CD4-positive, alpha-beta memory T cell (primary cell): ENCODE measurements at regions of chr9 and their contacts with region 1.

Region 1: DNA sequence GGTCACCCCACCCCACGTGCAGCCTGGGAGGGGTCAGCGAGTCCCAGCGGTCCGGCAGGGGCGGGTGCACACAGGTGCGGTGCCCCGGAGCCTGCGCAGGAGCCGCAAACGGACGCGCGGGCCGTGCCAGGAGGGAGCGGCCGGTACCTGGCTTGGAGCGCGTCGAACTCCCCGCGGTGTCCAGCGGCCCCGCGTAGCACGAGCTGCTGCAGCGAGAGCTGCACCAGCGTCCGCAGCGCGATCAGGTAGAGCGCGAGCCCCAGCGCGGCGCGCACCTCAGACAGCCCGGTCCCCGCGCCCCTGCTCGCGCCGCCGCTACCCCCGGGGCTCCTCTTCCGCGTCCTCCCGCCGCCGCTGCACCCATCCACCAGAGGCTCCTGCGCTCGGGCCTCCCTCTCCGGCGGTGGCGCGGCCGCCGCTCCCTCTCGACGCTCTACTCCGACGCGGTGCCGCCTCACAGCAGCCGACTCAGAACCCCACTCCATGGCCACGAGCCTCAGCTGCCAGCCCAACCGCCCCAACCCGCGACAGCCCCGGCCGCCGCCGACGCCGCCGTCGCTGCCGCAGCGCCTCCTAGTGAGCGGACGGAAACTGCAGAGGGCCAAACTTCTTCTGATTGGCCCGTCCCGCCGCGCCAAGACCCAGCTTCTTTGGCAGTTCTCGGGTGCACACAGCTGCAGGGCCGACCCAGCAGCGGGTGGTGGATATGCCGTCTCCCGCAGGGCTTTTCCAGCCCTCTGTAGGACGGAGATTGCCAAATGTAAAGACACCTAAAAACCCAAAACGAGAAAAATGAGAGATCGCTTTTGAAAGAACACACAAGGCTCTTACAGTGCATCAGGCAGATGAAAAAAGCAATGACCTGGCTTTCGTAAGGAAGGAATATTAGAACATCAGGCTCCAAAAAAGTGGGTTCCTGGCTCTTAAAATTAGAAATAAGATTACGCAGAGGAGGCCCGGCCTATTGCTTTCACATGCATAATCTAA is at the start of gene ERMP1:
- DNase-seq: peak; percentile 87 to 93 (median 90)
- H3K4me3 ChIP-seq: peak within 1 kb of the TSS; percentile 72 to 93
- H3K4me3 Mint-ChIP-seq: peak within 1 kb of the TSS; percentile 91 to 98 (median 96)
- H3K27ac ChIP-seq: peak within 1 kb of the TSS; percentile 53
- H3K27ac Mint-ChIP-seq: peak within 1 kb of the TSS; percentile 88 to 97 (median 95)
- H3K4me1 ChIP-seq: peaks cover 42% of the 10 kb centered on the region
- H3K4me1 Mint-ChIP-seq: peaks cover 33 to 58% (median 43%) of the 10 kb centered on the region in 4 donors
- H3K27me3 ChIP-seq: no peaks in the 10 kb centered on the region
- H3K27me3 Mint-ChIP-seq: no peaks in the 10 kb centered on the region
- total RNA-seq, gene ERMP1: 22.8 to 24.5 TPM

Region 2: DNA sequence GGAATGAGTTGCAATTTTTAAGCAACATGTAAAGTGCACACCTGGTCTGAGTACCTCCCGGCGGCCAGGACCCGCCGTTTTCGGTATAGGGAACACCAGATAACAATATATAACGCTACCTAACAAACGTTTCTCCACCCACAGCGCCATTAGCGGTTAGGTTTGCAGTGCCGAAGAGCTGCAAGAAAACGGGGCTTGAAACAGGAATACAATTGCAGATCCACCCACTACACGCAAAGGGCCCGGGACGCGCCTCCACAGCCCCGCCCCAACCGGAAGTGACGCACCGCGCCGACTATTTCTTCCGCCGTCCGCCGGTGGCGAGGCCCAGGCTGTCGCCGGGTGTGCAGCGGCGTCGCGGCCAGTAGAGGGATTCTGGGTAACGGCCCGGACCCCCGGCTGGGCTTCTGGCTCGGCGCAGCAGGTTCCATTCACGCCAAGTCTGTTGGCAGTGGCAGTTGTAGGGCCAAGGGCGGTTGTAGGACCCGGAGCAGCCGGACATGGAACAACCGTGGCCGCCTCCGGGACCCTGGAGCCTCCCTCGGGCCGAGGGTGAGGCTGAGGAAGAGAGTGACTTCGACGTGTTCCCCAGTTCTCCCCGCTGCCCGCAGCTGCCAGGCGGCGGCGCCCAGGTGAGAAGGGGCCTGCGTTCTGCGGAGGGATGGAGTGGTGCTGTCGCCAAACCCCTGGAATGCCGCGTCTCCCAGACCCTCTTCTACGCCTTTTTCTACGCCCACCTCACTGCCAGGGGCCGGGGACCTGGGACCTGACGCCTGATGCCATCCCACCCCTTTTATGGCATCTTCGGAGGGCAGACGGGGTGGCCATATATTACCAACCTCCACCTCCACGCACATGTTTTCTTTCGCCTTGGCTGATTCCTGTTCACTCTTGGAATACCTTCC is 1153.3 kb before region 1 on chr9 and contains the start of gene CDC37L1:
- CTCF ChIA-PET with region 1: no interaction called
- POLR2A ChIA-PET with region 1: no interaction called
- intact Hi-C with region 1: no loop called
- DNase-seq: peak; percentile 97 to 99 (median 99)
- H3K4me3 ChIP-seq: peak within 1 kb of the TSS; percentile 72 to 80
- H3K4me3 Mint-ChIP-seq: no peak within 1 kb of the TSS
- H3K27ac ChIP-seq: peak within 1 kb of the TSS; percentile 94
- H3K27ac Mint-ChIP-seq: no peak within 1 kb of the TSS
- H3K4me1 ChIP-seq: peaks cover 36% of the 10 kb centered on the region
- H3K4me1 Mint-ChIP-seq: peaks cover 11 to 16% (median 11%) of the 10 kb centered on the region in 4 donors
- H3K27me3 ChIP-seq: no peaks in the 10 kb centered on the region
- H3K27me3 Mint-ChIP-seq: no peaks in the 10 kb centered on the region
- total RNA-seq, gene CDC37L1: 27.2 to 27.8 TPM

Region 3: DNA sequence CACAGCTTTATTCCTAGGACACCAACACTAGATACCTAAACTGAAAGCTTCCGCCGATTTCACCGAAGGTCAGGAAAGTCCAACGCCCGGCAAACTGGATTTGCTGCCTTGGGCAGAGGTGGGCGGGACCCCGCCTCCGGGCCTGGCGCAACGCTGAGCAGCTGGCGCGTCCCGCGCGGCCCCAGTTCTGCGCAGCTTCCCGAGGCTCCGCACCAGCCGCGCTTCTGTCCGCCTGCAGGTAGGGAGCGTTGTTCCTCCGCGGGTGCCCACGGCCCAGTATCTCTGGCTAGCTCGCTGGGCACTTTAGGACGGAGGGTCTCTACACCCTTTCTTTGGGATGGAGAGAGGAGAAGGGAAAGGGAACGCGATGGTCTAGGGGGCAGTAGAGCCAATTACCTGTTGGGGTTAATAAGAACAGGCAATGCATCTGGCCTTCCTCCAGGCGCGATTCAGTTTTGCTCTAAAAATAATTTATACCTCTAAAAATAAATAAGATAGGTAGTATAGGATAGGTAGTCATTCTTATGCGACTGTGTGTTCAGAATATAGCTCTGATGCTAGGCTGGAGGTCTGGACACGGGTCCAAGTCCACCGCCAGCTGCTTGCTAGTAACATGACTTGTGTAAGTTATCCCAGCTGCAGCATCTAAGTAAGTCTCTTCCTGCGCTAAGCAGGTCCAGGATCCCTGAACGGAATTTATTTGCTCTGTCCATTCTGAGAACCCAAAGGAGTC is 382.3 kb before region 1 on chr9 and contains the start of gene CD274:
- CTCF ChIA-PET with region 1: no interaction called
- POLR2A ChIA-PET with region 1: interaction called, 7 read pairs
- intact Hi-C with region 1: loop called (anchors 1 kb)
- DNase-seq: peak; percentile 78 to 82 (median 80)
- H3K4me3 ChIP-seq: peak within 1 kb of the TSS; percentile 65 to 67
- H3K4me3 Mint-ChIP-seq: peak within 1 kb of the TSS; percentile 87 to 96 (median 94)
- H3K27ac ChIP-seq: peak within 1 kb of the TSS; percentile 97
- H3K27ac Mint-ChIP-seq: peak within 1 kb of the TSS; percentile 92 to 99 (median 95)
- H3K4me1 ChIP-seq: peaks cover 77% of the 10 kb centered on the region
- H3K4me1 Mint-ChIP-seq: peaks cover 50 to 89% (median 62%) of the 10 kb centered on the region in 4 donors
- H3K27me3 ChIP-seq: no peaks in the 10 kb centered on the region
- H3K27me3 Mint-ChIP-seq: no peaks in the 10 kb centered on the region
- total RNA-seq, gene CD274: 16.2 to 23.0 TPM

Region 4: GRCh38 chr9:5799314-5799713 is 33.5 kb before region 1 on chr9:
- CTCF ChIA-PET with region 1: interaction called, 14 read pairs
- POLR2A ChIA-PET with region 1: no interaction called
- intact Hi-C with region 1: loop called (anchors 5 kb)
- DNase-seq: peak in 4 of 5 donors; percentile 3 to 15 (median 7)
- H3K4me3 ChIP-seq: no peak overlapping the region
- H3K4me3 Mint-ChIP-seq: no peak overlapping the region
- H3K27ac ChIP-seq: no peak overlapping the region
- H3K27ac Mint-ChIP-seq: peak overlapping the region in 2 of 7 donors; percentile 37 to 63
- H3K4me1 ChIP-seq: peaks cover 4% of the 10 kb centered on the region
- H3K4me1 Mint-ChIP-seq: peaks cover 12 to 22% (median 13%) of the 10 kb centered on the region in 4 donors
- H3K27me3 ChIP-seq: no peaks in the 10 kb centered on the region
- H3K27me3 Mint-ChIP-seq: no peaks in the 10 kb centered on the region

Region 5: DNA sequence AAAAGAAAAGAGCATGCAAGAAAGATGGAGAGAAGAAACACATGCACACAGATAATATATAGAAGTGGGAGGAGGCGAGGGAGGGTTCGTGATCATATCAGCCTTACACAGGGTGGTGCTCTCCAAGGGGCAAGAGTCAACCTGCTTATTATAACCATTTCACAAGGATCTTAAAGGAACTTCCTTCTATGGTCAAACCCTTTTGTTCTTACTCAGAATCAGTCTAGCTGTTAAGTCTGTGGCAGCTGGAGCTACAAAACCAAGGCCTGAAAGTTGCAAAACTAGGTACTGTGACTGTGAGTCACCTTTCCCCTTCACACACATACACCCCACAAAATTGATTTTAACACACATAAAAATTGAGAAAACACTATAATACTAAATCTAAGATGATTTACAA is 18.6 kb after region 1 on chr9:
- CTCF ChIA-PET with region 1: interaction called, 21 read pairs
- POLR2A ChIA-PET with region 1: interaction called, 14 read pairs
- intact Hi-C with region 1: no loop called
- DNase-seq: no peak
- H3K4me3 ChIP-seq: no peak overlapping the region
- H3K4me3 Mint-ChIP-seq: peak overlapping the region in 5 of 8 donors; percentile 5 to 39 (median 16)
- H3K27ac ChIP-seq: no peak overlapping the region
- H3K27ac Mint-ChIP-seq: peak overlapping the region; percentile 8 to 88 (median 51)
- H3K4me1 ChIP-seq: peaks cover 28% of the 10 kb centered on the region
- H3K4me1 Mint-ChIP-seq: peaks cover 24 to 60% (median 39%) of the 10 kb centered on the region in 4 donors
- H3K27me3 ChIP-seq: no peaks in the 10 kb centered on the region
- H3K27me3 Mint-ChIP-seq: no peaks in the 10 kb centered on the region

Region 6: DNA sequence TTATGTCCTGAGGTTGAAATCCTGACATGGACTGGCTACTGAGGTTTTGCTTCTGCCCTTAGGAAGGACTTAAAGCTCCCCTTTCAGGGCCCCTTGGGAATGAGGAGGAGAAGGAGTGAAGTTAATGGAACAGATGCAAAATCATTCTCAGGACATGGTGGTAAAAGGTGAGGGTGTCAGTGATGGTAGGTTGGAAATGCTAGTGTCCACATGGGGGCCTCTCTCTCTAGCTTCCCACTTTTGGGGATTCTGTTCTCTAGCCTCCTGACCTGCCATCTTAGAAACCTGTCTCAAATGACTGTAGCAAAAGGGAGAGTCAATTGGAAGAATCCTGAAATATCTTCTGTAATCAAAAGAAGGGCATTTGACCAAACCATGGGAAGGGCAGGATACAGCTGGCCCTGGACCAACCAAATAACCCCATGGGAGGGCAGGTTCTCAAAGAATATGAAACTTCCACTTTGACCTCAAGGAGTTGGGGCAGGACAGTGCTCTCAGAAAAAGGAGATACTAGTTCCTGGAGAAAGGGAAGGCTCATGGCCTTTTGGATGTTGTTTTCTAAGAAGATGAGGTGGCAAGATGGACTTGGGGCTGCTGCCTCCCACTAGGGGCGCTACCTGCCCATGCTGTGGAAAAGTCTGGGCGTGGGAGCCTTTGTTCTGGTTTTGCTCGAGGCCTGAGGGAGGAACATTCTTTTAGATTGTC is 36.6 kb after region 1 on chr9:
- CTCF ChIA-PET with region 1: interaction called, 23 read pairs
- POLR2A ChIA-PET with region 1: interaction called, 5 read pairs
- intact Hi-C with region 1: loop called (anchors 5 kb)
- DNase-seq: peak in 2 of 5 donors; percentile 16 to 24
- H3K4me3 ChIP-seq: no peak overlapping the region
- H3K4me3 Mint-ChIP-seq: no peak overlapping the region
- H3K27ac ChIP-seq: no peak overlapping the region
- H3K27ac Mint-ChIP-seq: no peak overlapping the region
- H3K4me1 ChIP-seq: no peaks in the 10 kb centered on the region
- H3K4me1 Mint-ChIP-seq: peaks cover 0 to 12% (median 9%) of the 10 kb centered on the region in 4 donors
- H3K27me3 ChIP-seq: no peaks in the 10 kb centered on the region
- H3K27me3 Mint-ChIP-seq: no peaks in the 10 kb centered on the region

Region 7: GRCh38 chr9:6008169-6008979 is 175.5 kb after region 1 on chr9:
- CTCF ChIA-PET with region 1: interaction called, 5 read pairs
- POLR2A ChIA-PET with region 1: interaction called, 5 read pairs
- intact Hi-C with region 1: loop called (anchors 1 kb)
- DNase-seq: peak; percentile 90 to 99 (median 95)
- H3K4me3 ChIP-seq: peak overlapping the region in 1 of 2 donors; percentile 82
- H3K4me3 Mint-ChIP-seq: peak overlapping the region; percentile 69 to 93 (median 82)
- H3K27ac ChIP-seq: peak overlapping the region; percentile 83
- H3K27ac Mint-ChIP-seq: peak overlapping the region; percentile 91 to 96 (median 94)
- H3K4me1 ChIP-seq: peaks cover 45% of the 10 kb centered on the region
- H3K4me1 Mint-ChIP-seq: peaks cover 28 to 76% (median 45%) of the 10 kb centered on the region in 4 donors
- H3K27me3 ChIP-seq: no peaks in the 10 kb centered on the region
- H3K27me3 Mint-ChIP-seq: no peaks in the 10 kb centered on the region